Heart left ventricle (tissue), 16 donors: ENCODE measurements at regions of chr2 and their contacts with region 1.

Region 1: GRCh38 chr2:60550178-60550983 is 3.1 kb downstream of the BCL11A start:
- DNase-seq: peak; percentile 67 to 79 (median 76)
- ATAC-seq: peak; percentile 78 to 81 (median 79)
- H3K4me3 ChIP-seq: peak overlapping the region; percentile 19 to 80 (median 68)
- H3K27ac ChIP-seq: peak overlapping the region in 11 of 12 donors; percentile 63 to 89 (median 76)
- H3K4me1 ChIP-seq: peaks cover 0 to 69% (median 35%) of the 10 kb centered on the region in 12 donors
- H3K27me3 ChIP-seq: peaks cover 17 to 93% (median 59%) of the 10 kb centered on the region in 9 donors
- CTCF ChIP-seq: peak in 11 of 12 donors; percentile 29 to 66 (median 48)
- POLR2A ChIP-seq: no peak

Region 2: GRCh38 chr2:59296279-59296678 is 1254.1 kb before region 1 on chr2:
- intact Hi-C with region 1: loop called in 6 of 10 experiments (anchors 5 to 10 kb)
- DNase-seq: no peak
- ATAC-seq: no peak
- H3K4me3 ChIP-seq: no peak overlapping the region
- H3K27ac ChIP-seq: no peak overlapping the region
- H3K4me1 ChIP-seq: peaks cover 0 to 7% (median 0%) of the 10 kb centered on the region in 12 donors
- H3K27me3 ChIP-seq: no peaks in the 10 kb centered on the region
- CTCF ChIP-seq: no peak
- POLR2A ChIP-seq: no peak

Region 3: GRCh38 chr2:60002158-60002867 is 548.1 kb before region 1 on chr2:
- intact Hi-C with region 1: no loop called
- DNase-seq: no peak
- ATAC-seq: no peak
- H3K4me3 ChIP-seq: no peak overlapping the region
- H3K27ac ChIP-seq: no peak overlapping the region
- H3K4me1 ChIP-seq: no peaks in the 10 kb centered on the region
- H3K27me3 ChIP-seq: no peaks in the 10 kb centered on the region
- CTCF ChIP-seq: no peak
- POLR2A ChIP-seq: no peak

Region 4: DNA sequence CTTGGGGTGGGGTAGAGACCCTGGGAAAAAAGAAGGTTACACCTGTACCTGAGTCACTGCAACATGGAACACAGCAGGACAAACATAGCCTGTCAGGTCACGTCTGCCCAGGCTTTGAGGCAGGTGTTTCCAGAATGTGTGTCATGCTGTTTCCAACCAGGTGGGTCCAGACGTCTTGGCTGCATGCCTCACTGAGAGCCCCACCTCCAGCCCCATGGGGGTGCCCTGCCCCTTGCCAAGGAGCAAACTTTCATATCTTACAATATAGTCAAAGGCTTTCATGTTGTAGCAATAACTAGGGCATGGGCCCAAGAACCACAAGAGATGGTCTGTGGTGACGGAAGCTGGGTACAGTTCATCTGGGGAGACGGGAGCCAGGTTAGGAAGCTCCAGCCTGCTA is 496.6 kb before region 1 on chr2:
- intact Hi-C with region 1: loop called in 1 of 10 experiments (anchors 5 kb)
- DNase-seq: no peak
- ATAC-seq: no peak
- H3K4me3 ChIP-seq: no peak overlapping the region
- H3K27ac ChIP-seq: peak overlapping the region in 8 of 12 donors; percentile 49 to 85 (median 74)
- H3K4me1 ChIP-seq: peaks cover 0 to 15% (median 7%) of the 10 kb centered on the region in 12 donors
- H3K27me3 ChIP-seq: no peaks in the 10 kb centered on the region
- CTCF ChIP-seq: no peak
- POLR2A ChIP-seq: no peak

Region 5: GRCh38 chr2:60337140-60337494 is 213.3 kb before region 1 on chr2:
- intact Hi-C with region 1: loop called in 7 of 10 experiments (anchors 2 to 10 kb)
- DNase-seq: peak in 3 of 5 donors; percentile 25 to 62 (median 55)
- ATAC-seq: peak; percentile 47 to 84 (median 64)
- H3K4me3 ChIP-seq: no peak overlapping the region
- H3K27ac ChIP-seq: no peak overlapping the region
- H3K4me1 ChIP-seq: peaks cover 0 to 26% (median 0%) of the 10 kb centered on the region in 12 donors
- H3K27me3 ChIP-seq: no peaks in the 10 kb centered on the region
- CTCF ChIP-seq: peak in 9 of 12 donors; percentile 11 to 49 (median 36)
- POLR2A ChIP-seq: no peak

Region 6: GRCh38 chr2:60484133-60484645 is 66.2 kb before region 1 on chr2:
- intact Hi-C with region 1: loop called in 1 of 10 experiments (anchors 5 kb)
- DNase-seq: peak in 1 of 5 donors; percentile 54
- ATAC-seq: peak in 3 of 4 donors; percentile 49 to 59 (median 53)
- H3K4me3 ChIP-seq: peak overlapping the region in 1 of 12 donors; percentile 18
- H3K27ac ChIP-seq: peak overlapping the region; percentile 35 to 88 (median 79)
- H3K4me1 ChIP-seq: peaks cover 0 to 57% (median 38%) of the 10 kb centered on the region in 12 donors
- H3K27me3 ChIP-seq: peaks cover 0 to 6% (median 0%) of the 10 kb centered on the region in 9 donors
- CTCF ChIP-seq: no peak
- POLR2A ChIP-seq: no peak

Region 7: DNA sequence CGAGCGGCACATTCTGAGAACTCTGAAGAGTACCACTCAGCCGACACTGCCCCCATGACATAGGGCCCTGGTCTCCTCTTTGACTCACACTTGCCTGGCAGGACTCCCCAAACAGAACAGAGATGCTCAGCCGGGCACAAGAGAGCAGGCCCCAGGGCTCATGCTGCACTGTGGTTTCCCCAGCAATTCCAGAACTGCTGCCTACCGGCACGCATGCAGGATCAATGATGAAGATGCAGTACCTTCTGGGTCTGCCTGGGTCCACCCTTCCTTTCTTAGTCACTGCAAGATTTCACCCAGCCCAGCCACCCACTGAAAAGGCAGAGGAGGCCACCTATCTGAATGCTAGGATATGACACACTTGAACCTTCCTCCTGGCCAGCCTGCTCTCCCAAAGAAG is 46.3 kb before region 1 on chr2:
- intact Hi-C with region 1: loop called in 3 of 10 experiments (anchors 2 to 5 kb)
- DNase-seq: peak in 2 of 5 donors; percentile 36 to 51
- ATAC-seq: peak in 3 of 4 donors; percentile 31 to 60 (median 53)
- H3K4me3 ChIP-seq: no peak overlapping the region
- H3K27ac ChIP-seq: peak overlapping the region in 2 of 12 donors; percentile 16 to 62
- H3K4me1 ChIP-seq: peaks cover 0 to 73% (median 15%) of the 10 kb centered on the region in 12 donors
- H3K27me3 ChIP-seq: no peaks in the 10 kb centered on the region
- CTCF ChIP-seq: peak in 5 of 12 donors; percentile 11 to 32 (median 23)
- POLR2A ChIP-seq: no peak